Endothelial cell of umbilical vein (primary cell): ENCODE measurements at regions of chr6 and their contacts with region 1.

Region 1: GRCh38 chr6:3118353-3119039 is at the start of gene BPHL:
- DNase-seq: peak; percentile 94
- H3K4me3 ChIP-seq: peak within 1 kb of the TSS; percentile 54 to 98 (median 74)
- H3K27ac ChIP-seq: peak within 1 kb of the TSS; percentile 88
- H3K4me1 ChIP-seq: peaks cover 10% of the 10 kb centered on the region
- H3K27me3 ChIP-seq: no peaks in the 10 kb centered on the region
- CTCF ChIP-seq: no peak
- POLR2A ChIP-seq: peak; percentile 69
- total RNA-seq, gene BPHL: 14.8 and 16.6 TPM in 2 replicates

Region 2: DNA sequence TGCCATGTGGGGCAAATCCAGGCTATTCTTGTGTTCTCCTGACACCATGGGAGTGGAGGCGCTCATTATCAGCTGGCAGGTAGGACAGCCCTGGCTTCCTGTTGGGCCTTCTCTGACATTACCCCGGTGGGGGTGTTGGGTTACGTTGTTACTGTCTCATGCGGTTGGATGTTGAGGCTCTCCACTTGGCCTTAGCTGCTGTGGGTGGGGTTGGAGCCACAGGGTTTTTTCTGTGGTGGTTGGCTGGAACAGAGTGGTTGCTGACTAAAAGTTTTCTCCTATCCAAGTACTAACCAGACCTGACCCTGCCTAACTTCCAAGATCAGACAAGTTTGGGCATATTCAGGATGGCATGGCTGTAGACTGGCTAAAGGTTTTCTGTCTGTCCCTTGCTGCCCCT is 30.1 kb before region 1 on chr6:
- CTCF ChIA-PET with region 1: no interaction called
- POLR2A ChIA-PET with region 1: no interaction called
- dilution Hi-C with region 1: no loop called
- intact Hi-C with region 1: no loop called
- DNase-seq: no peak
- H3K4me3 ChIP-seq: no peak overlapping the region
- H3K27ac ChIP-seq: no peak overlapping the region
- H3K4me1 ChIP-seq: peaks cover 12% of the 10 kb centered on the region
- H3K27me3 ChIP-seq: no peaks in the 10 kb centered on the region
- CTCF ChIP-seq: no peak
- POLR2A ChIP-seq: no peak

Region 3: GRCh38 chr6:3965071-3965718 is 846.7 kb after region 1 on chr6:
- CTCF ChIA-PET with region 1: no interaction called
- POLR2A ChIA-PET with region 1: no interaction called
- dilution Hi-C with region 1: no loop called
- intact Hi-C with region 1: no loop called
- DNase-seq: peak; percentile 70
- H3K4me3 ChIP-seq: peak overlapping the region in 1 of 3 experiments; percentile 7
- H3K27ac ChIP-seq: peak overlapping the region; percentile 42
- H3K4me1 ChIP-seq: peaks cover 18% of the 10 kb centered on the region
- H3K27me3 ChIP-seq: no peaks in the 10 kb centered on the region
- CTCF ChIP-seq: no peak
- POLR2A ChIP-seq: no peak

Region 4: GRCh38 chr6:4018172-4018905 is 899.8 kb after region 1 on chr6:
- CTCF ChIA-PET with region 1: no interaction called
- POLR2A ChIA-PET with region 1: no interaction called
- dilution Hi-C with region 1: no loop called
- intact Hi-C with region 1: loop called (anchors 5 kb)
- DNase-seq: peak; percentile 94
- H3K4me3 ChIP-seq: peak overlapping the region; percentile 50 to 92 (median 85)
- H3K27ac ChIP-seq: peak overlapping the region; percentile 93
- H3K4me1 ChIP-seq: peaks cover 29% of the 10 kb centered on the region
- H3K27me3 ChIP-seq: no peaks in the 10 kb centered on the region
- CTCF ChIP-seq: peak; percentile 25 to 52
- POLR2A ChIP-seq: peak; percentile 84